Posterior cingulate gyrus (tissue), 11 donors: ENCODE measurements at regions of chr6 and their contacts with region 1.

Region 1: DNA sequence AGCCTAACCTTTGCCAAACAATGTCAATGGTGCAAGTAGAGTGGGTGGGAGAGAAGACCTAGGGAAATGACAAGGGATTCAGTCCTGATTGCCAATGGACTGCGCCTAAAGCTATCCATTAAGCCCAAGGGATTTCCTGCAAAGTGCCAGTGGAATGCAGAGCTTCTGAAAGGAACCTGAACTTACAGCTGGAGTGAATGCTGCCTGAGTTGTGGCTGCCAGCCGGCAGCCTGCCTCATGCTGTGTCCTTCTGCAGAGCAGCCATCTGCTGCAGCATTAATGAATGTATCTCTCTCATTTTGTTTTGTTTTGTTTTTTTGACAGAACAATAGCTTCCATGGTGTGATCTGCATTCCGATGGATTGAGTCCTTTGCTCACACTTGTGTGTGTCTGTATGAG is 44.7 kb downstream of the SLC35F1 start:
- DNase-seq: peak in 6 of 10 donors; percentile 12 to 70 (median 28)

Region 2: DNA sequence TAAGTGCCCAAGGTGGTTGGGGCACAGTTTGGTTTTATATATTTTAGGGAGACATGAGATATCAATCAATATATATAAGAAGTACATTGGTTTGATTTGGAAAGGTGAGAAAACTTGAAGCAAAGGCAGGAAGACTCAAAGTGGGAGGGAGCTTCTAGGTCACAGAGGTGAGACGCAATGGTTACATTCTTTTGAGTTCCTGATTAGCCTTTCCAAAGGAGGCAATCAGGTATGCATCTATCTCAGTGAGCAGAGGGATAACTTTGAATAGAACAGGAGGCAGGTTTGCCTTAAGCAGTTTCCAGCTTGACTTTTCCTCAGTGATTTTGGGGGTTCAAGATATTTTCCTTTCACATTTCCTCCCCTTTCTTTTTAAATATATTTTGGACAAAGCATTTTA is 102.7 kb before region 1 on chr6:
- intact Hi-C with region 1: no loop called
- DNase-seq: no peak

Region 3: GRCh38 chr6:117919775-117920729 is 31.7 kb before region 1 on chr6:
- intact Hi-C with region 1: loop called (anchors 5 kb)
- DNase-seq: peak; percentile 28 to 91 (median 60)

Region 4: GRCh38 chr6:117930645-117931044 is 21.1 kb before region 1 on chr6:
- intact Hi-C with region 1: no loop called
- DNase-seq: no peak